Activated naive CD4-positive, alpha-beta T cell treated with anti-CD3 and anti-CD28 coated beads, Interleukin-2, amount 10 ng/mL, durations not matched to agents 7 days and 5 days (primary cell): ENCODE measurements at regions of chr12 and their contacts with region 1.

Region 1: DNA sequence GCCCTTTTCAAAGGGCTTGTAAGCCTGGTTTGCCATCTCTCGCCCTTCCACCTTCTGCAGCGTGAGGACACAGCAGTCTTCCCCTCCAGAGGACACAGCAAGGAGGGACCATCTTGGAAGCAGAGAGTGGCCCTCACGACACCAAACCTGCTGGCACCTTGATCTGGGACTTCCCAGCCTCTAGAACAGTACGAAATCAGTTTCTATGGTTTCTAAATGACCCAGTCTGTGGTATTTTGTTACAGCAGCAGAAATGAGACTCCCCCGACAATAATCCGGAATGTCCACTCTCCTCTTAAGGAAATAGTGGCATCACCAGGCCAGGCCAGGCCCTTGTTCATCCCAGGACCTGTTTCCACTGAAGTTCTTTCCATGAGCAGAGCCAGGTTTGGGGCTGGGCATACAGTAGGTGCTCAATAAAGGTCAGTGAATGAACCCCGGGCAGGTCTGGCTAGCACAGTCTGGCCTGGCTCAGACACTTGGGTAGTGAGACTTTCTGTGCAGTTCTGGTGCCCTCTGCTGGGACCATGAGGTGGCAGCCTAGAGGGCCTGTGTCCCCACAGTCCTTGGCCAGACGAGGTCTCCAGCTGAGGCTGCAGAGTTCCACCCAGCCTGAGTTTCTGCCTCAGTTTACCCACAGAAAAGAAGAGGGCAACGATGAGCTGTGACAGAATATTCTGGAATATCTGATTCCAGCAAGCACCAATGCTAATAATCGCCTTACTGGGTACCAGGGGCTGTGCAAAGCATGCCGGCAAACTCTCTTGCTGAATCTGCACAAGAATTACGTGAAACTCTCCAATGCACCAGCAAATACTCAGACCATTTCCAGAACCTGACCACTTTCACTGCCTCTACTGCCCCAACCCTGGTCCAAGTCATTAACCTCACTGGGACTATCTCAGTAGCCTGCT is 14.0 kb downstream of the ABCB9 start:
- DNase-seq: peak; percentile 85
- H3K4me3 Mint-ChIP-seq: no peak overlapping the region
- H3K27ac Mint-ChIP-seq: no peak overlapping the region
- H3K4me1 Mint-ChIP-seq: peaks cover 13% of the 10 kb centered on the region
- H3K27me3 Mint-ChIP-seq: no peaks in the 10 kb centered on the region

Region 2: DNA sequence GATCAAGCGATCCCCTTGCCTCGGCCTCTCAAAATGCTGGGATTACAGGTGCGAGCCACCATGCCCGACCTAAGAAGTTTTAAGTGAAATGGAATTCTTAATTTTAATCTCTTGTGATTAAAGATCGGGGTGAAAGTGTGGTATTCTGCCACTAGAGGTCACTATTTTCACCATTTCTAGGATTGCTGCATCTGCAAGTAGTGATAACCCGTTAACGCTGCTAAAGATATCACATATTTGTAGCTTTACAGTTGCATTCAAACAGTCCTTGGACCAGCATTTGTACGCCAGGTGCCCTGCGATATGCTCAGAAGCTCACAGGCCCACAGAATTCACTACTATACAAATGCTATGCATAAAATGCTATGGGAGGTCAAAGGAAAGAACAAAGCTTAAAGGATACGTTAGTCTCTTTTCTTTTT is 158.5 kb before region 1 on chr12:
- CTCF ChIA-PET with region 1: interaction called, 49 read pairs
- DNase-seq: no peak
- H3K4me3 Mint-ChIP-seq: no peak overlapping the region
- H3K27ac Mint-ChIP-seq: no peak overlapping the region
- H3K4me1 Mint-ChIP-seq: no peaks in the 10 kb centered on the region
- H3K27me3 Mint-ChIP-seq: peaks cover 4% of the 10 kb centered on the region

Region 3: GRCh38 chr12:122860346-122861090 is 91.7 kb before region 1 on chr12:
- CTCF ChIA-PET with region 1: interaction called, 106 read pairs
- DNase-seq: peak; percentile 87
- H3K4me3 Mint-ChIP-seq: no peak overlapping the region
- H3K27ac Mint-ChIP-seq: peak overlapping the region; percentile 76
- H3K4me1 Mint-ChIP-seq: peaks cover 6% of the 10 kb centered on the region
- H3K27me3 Mint-ChIP-seq: no peaks in the 10 kb centered on the region

Region 4: GRCh38 chr12:122871851-122872780 is 80.1 kb before region 1 on chr12:
- CTCF ChIA-PET with region 1: interaction called, 21 read pairs
- DNase-seq: peak; percentile 64
- H3K4me3 Mint-ChIP-seq: peak overlapping the region; percentile 73
- H3K27ac Mint-ChIP-seq: peak overlapping the region; percentile 84
- H3K4me1 Mint-ChIP-seq: peaks cover 68% of the 10 kb centered on the region
- H3K27me3 Mint-ChIP-seq: no peaks in the 10 kb centered on the region

Region 5: GRCh38 chr12:122880668-122881067 is 71.6 kb before region 1 on chr12:
- CTCF ChIA-PET with region 1: interaction called, 35 read pairs
- DNase-seq: no peak
- H3K4me3 Mint-ChIP-seq: no peak overlapping the region
- H3K27ac Mint-ChIP-seq: no peak overlapping the region
- H3K4me1 Mint-ChIP-seq: peaks cover 83% of the 10 kb centered on the region
- H3K27me3 Mint-ChIP-seq: peaks cover 27% of the 10 kb centered on the region

Region 6: DNA sequence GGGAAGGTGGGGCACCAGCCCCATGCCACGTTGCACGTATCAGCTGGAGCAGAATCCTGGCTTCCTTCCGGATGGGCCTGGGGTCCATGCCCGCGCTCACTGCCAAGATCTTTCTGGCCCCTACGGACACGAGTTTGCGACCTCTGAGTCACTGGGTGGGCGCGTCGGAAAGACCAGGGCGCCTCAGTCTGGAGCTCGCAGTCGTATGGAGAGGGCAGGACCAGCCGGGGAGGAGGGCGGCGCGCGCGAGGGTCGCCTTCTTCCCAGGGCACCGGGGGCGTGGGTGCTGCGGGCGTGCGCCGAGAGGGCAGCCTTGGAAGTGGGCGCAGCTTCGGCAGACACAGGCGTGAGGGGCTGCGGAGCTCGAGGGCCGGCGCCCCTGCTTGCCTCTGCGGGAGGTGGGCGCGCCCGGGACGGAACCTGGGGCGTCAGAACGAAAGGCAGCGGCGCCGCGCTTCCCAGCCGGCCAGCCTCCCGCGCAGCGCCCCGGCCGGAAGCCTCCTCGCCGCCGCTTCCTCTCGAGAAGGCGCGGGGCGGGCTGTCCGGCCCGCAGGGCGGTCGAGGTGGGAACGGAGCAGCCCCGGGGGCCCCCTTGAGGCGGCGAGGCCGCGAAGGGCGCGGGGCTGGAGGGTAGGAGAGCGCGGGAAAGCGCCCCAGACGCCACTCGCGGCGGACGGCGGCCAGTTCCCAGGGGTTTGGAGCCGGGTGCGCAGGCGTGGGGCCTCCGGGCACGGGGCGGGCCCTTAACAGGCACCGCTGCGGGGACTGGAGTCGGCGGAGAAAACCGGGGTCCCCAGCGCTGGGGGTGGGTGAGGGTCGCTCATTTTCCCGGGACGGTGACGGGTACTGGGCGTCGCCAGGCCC is 28.2 kb after region 1 on chr12 and contains the start of gene ARL6IP4:
- CTCF ChIA-PET with region 1: no interaction called
- DNase-seq: peak; percentile 75
- H3K4me3 Mint-ChIP-seq: peak within 1 kb of the TSS; percentile 90
- H3K27ac Mint-ChIP-seq: peak within 1 kb of the TSS; percentile 91
- H3K4me1 Mint-ChIP-seq: peaks cover 75% of the 10 kb centered on the region
- H3K27me3 Mint-ChIP-seq: no peaks in the 10 kb centered on the region

Region 7: GRCh38 chr12:123021688-123022604 is 69.7 kb after region 1 on chr12:
- CTCF ChIA-PET with region 1: no interaction called
- DNase-seq: no peak
- H3K4me3 Mint-ChIP-seq: no peak overlapping the region
- H3K27ac Mint-ChIP-seq: no peak overlapping the region
- H3K4me1 Mint-ChIP-seq: peaks cover 20% of the 10 kb centered on the region
- H3K27me3 Mint-ChIP-seq: no peaks in the 10 kb centered on the region

Region 8: DNA sequence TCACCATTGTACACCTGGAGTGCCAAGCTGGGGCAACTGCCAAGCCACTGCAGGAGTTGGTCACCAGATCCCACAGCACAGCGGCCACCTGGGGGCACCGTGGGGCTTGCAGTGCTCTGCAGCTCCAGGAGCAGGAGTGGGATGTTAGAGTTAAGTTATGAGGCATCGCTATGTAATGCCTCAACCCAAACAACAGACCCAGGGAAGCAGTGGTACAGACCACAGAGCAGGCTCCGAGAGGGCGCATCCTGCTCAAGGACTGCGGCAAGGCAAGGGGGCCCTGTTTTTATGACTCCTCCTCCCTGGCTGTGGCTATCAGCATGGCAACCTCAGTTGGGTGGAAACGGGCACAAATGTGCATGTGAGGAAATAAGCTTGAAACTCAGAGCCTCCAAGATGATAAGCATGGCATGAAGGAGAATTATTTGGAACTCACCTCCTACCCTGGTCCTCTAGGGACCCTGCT is 91.3 kb after region 1 on chr12:
- CTCF ChIA-PET with region 1: no interaction called
- DNase-seq: peak; percentile 86
- H3K4me3 Mint-ChIP-seq: no peak overlapping the region
- H3K27ac Mint-ChIP-seq: peak overlapping the region; percentile 45
- H3K4me1 Mint-ChIP-seq: peaks cover 30% of the 10 kb centered on the region
- H3K27me3 Mint-ChIP-seq: no peaks in the 10 kb centered on the region